ENCODE measurements at regions of chrX and their contacts with region 1.

Region 1: GRCh38 chrX:55742649-55743048 is 25.1 kb downstream of the RRAGB start:
- DNase-seq: no peak

Region 2: DNA sequence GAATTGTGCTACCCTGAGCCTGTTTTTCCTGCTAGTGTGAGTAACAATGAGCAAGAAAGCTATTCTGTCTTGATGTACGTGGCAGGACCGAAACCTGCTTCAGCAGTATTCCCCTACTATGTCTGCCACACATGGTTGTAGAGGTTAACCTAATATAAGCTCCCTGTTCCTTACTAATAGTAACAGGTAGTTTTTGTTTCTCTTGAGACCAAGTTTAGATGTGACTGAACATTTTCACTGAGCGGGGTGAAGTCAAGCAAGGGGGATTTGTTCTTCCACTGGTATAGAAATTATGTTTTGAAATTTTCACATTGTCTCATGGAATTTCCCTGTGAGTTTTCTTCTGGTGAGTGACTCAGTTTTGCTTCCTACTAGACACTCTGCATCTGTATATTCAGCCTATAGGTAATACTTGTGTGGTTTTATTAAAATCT is 12.2 kb after region 1 on chrX:
- intact Hi-C with region 1: loop called in 1 of 2 experiments (anchors 1 kb)
- DNase-seq: no peak

Region 3: DNA sequence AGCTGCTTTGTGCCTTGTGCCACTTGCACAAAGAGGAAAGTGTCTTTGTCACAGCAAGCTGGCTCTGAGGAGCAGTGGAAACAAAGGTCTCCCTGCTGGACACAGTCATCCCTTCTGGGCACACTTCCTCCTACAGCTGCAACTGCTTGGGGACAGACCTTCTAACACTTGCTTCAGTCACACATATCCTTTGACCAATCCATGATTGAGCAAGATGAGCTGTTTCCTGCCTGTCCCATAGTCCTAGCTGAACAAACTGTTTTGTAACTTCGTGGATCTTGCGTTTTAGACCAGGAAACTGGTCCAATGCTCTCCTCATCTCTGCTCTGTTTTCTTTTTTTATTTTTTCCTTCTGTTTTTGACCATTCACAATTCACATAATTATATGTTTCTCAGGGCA is 73.4 kb after region 1 on chrX:
- intact Hi-C with region 1: loop called in 1 of 2 experiments (anchors 2 kb)
- DNase-seq: no peak

Region 4: GRCh38 chrX:56268888-56269287 is 526.2 kb after region 1 on chrX:
- intact Hi-C with region 1: no loop called
- DNase-seq: no peak

Measured in posterior vena cava (tissue), 2 donors.